ENCODE measurements at regions of chr6 and their contacts with region 1.

Region 1: GRCh38 chr6:98947351-98948292 is at the start of gene FBXL4:
- DNase-seq: peak; percentile 68 to 87 (median 79)
- ATAC-seq: peak; percentile 93
- H3K4me3 ChIP-seq: peak within 1 kb of the TSS; percentile 88
- H3K4me3 Mint-ChIP-seq: peak within 1 kb of the TSS; percentile 85 to 99 (median 96)
- H3K27ac ChIP-seq: peak within 1 kb of the TSS; percentile 70
- H3K27ac Mint-ChIP-seq: peak within 1 kb of the TSS; percentile 90 to 97 (median 94)
- H3K4me1 ChIP-seq: peaks cover 12 to 18% of the 10 kb centered on the region in 2 donors
- H3K4me1 Mint-ChIP-seq: peaks cover 23 to 46% (median 40%) of the 10 kb centered on the region in 7 donors
- H3K27me3 ChIP-seq: no peaks in the 10 kb centered on the region
- H3K27me3 Mint-ChIP-seq: peaks cover 0 to 29% (median 0%) of the 10 kb centered on the region in 5 donors
- total RNA-seq, gene FBXL4: 12.0 to 24.3 (median 13.5) TPM

Region 2: GRCh38 chr6:97282726-97283617 is 1664.7 kb before region 1 on chr6 and contains the start of gene MMS22L:
- CTCF ChIA-PET with region 1: no interaction called
- POLR2A ChIA-PET with region 1: no interaction called
- intact Hi-C with region 1: loop called (anchors 2 kb)
- DNase-seq: peak; percentile 83 to 93 (median 90)
- ATAC-seq: peak; percentile 99
- H3K4me3 ChIP-seq: peak within 1 kb of the TSS; percentile 90
- H3K4me3 Mint-ChIP-seq: peak within 1 kb of the TSS; percentile 90 to 98 (median 96)
- H3K27ac ChIP-seq: peak within 1 kb of the TSS; percentile 70
- H3K27ac Mint-ChIP-seq: peak within 1 kb of the TSS; percentile 83 to 96 (median 89)
- H3K4me1 ChIP-seq: peaks cover 0 to 16% of the 10 kb centered on the region in 2 donors
- H3K4me1 Mint-ChIP-seq: peaks cover 5 to 37% (median 24%) of the 10 kb centered on the region in 7 donors
- H3K27me3 ChIP-seq: no peaks in the 10 kb centered on the region
- H3K27me3 Mint-ChIP-seq: peaks cover 0 to 8% (median 0%) of the 10 kb centered on the region in 5 donors
- total RNA-seq, gene MMS22L: 11.8 to 48.1 (median 12.9) TPM

Region 3: GRCh38 chr6:98808541-98809210 is 138.9 kb before region 1 on chr6:
- CTCF ChIA-PET with region 1: no interaction called
- POLR2A ChIA-PET with region 1: no interaction called
- intact Hi-C with region 1: no loop called
- DNase-seq: no peak
- ATAC-seq: no peak
- H3K4me3 ChIP-seq: no peak overlapping the region
- H3K4me3 Mint-ChIP-seq: no peak overlapping the region
- H3K27ac ChIP-seq: no peak overlapping the region
- H3K27ac Mint-ChIP-seq: no peak overlapping the region
- H3K4me1 ChIP-seq: no peaks in the 10 kb centered on the region
- H3K4me1 Mint-ChIP-seq: no peaks in the 10 kb centered on the region
- H3K27me3 ChIP-seq: no peaks in the 10 kb centered on the region
- H3K27me3 Mint-ChIP-seq: peaks cover 2 to 15% (median 7%) of the 10 kb centered on the region in 5 donors

Region 4: GRCh38 chr6:98845211-98846020 is 102.2 kb before region 1 on chr6:
- CTCF ChIA-PET with region 1: no interaction called
- POLR2A ChIA-PET with region 1: interaction called, 4 read pairs
- intact Hi-C with region 1: loop called in 1 of 2 experiments (anchors 2 kb)
- DNase-seq: peak in 6 of 9 donors; percentile 52 to 68 (median 64)
- ATAC-seq: peak; percentile 80
- H3K4me3 ChIP-seq: no peak overlapping the region
- H3K4me3 Mint-ChIP-seq: peak overlapping the region; percentile 59 to 77 (median 74)
- H3K27ac ChIP-seq: no peak overlapping the region
- H3K27ac Mint-ChIP-seq: peak overlapping the region in 1 of 9 donors; percentile 71
- H3K4me1 ChIP-seq: peaks cover 3 to 28% of the 10 kb centered on the region in 2 donors
- H3K4me1 Mint-ChIP-seq: peaks cover 12 to 43% (median 25%) of the 10 kb centered on the region in 7 donors
- H3K27me3 ChIP-seq: peaks cover 18 to 55% of the 10 kb centered on the region in 2 donors
- H3K27me3 Mint-ChIP-seq: peaks cover 79 to 89% (median 86%) of the 10 kb centered on the region in 5 donors

Region 5: DNA sequence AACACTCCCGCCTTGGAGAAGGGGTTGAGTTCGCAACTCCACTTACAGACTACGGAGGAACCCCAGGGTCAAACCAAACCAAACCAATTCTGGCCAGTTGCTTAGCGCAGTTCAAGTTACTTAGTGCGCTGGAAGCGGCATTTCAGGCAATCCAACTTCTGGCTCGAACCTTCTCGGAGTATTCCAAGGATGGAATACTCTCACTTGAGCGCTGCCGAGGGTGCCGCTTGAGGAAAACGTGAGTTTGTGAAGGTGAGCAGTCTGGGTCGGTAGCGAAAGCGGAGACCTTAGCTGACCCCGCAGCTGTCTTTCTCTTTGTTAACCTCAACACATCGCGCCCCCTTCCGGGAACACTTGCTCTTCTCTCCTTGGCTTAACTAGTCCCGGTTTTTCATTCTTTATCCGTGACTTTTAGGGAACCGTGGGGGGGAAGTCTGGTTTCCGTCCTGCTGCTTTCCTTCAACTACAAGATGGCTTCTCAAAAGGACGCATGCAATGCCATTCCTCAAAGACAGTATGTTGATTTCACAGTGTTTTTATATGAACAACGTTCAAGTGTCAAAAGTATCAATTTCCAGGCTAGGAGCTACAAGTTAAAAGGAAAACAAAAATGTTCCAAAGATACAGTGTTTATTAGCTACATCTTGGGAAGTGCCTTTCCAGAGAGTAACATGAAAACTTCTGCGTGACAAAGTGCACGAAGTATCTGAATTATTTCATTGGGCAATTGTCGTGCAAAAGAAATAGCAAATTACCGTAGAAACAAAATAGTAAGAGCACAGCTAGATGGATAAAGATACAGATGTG is 478.2 kb after region 1 on chr6:
- CTCF ChIA-PET with region 1: no interaction called
- POLR2A ChIA-PET with region 1: no interaction called
- intact Hi-C with region 1: loop called (anchors 1 kb)
- DNase-seq: peak in 4 of 9 donors; percentile 54 to 65 (median 58)
- ATAC-seq: peak; percentile 58
- H3K4me3 ChIP-seq: peak overlapping the region; percentile 95
- H3K4me3 Mint-ChIP-seq: peak overlapping the region; percentile 91 to 100 (median 96)
- H3K27ac ChIP-seq: peak overlapping the region; percentile 93
- H3K27ac Mint-ChIP-seq: peak overlapping the region; percentile 96 to 100 (median 99)
- H3K4me1 ChIP-seq: peaks cover 37 to 50% of the 10 kb centered on the region in 2 donors
- H3K4me1 Mint-ChIP-seq: peaks cover 43 to 74% (median 61%) of the 10 kb centered on the region in 7 donors
- H3K27me3 ChIP-seq: no peaks in the 10 kb centered on the region
- H3K27me3 Mint-ChIP-seq: peaks cover 0 to 2% (median 0%) of the 10 kb centered on the region in 5 donors

Region 6: DNA sequence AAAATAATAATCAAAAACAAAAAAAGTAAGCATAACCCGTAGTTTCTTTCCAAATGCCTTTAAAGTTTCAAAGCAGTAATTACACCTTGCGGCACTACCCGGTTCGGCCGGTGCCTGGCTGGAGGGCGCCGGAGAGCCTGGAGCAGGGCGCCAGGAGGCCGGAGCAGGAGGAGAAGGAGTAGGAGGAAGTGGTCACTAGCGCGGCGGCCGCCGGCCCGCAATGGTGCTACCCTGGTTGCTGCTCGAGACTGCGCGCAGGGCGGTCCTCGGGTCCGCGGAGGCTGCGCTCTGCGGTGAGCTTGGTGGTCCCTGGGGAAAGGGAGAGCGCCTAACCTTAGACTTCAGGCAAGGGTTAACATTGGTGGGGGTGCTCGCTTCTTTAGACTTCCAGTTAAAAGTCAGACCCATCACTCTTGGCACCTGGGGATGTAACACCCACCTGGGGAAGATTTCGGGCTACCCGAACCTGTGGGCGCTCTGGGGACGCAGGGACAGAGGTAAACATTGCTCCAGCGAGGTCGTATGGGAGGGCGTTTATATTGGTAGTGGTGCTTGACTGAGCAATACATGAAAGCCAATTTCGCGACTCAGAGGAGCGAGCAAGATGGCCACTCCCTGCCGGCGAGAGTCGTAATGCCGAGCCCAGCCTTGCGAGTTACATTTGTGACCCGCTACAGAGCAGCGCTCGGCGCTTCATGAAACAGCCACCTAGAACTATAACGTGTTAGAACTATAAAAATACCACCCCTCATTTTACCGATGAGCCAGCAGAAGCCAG is 573.4 kb after region 1 on chr6:
- CTCF ChIA-PET with region 1: no interaction called
- POLR2A ChIA-PET with region 1: no interaction called
- intact Hi-C with region 1: loop called (anchors 5 to 10 kb)
- DNase-seq: peak; percentile 43 to 79 (median 62)
- ATAC-seq: peak; percentile 92
- H3K4me3 ChIP-seq: peak overlapping the region; percentile 73
- H3K4me3 Mint-ChIP-seq: peak overlapping the region; percentile 87 to 99 (median 92)
- H3K27ac ChIP-seq: peak overlapping the region; percentile 60
- H3K27ac Mint-ChIP-seq: peak overlapping the region; percentile 38 to 97 (median 90)
- H3K4me1 ChIP-seq: peaks cover 4 to 11% of the 10 kb centered on the region in 2 donors
- H3K4me1 Mint-ChIP-seq: peaks cover 12 to 26% (median 17%) of the 10 kb centered on the region in 7 donors
- H3K27me3 ChIP-seq: no peaks in the 10 kb centered on the region
- H3K27me3 Mint-ChIP-seq: peaks cover 0 to 15% (median 0%) of the 10 kb centered on the region in 5 donors

Region 7: GRCh38 chr6:100880853-100881706 is 1933.5 kb after region 1 on chr6 and contains the start of gene ASCC3:
- CTCF ChIA-PET with region 1: no interaction called
- POLR2A ChIA-PET with region 1: no interaction called
- intact Hi-C with region 1: loop called in 1 of 2 experiments (anchors 1 kb)
- DNase-seq: peak; percentile 80 to 93 (median 86)
- ATAC-seq: peak; percentile 98
- H3K4me3 ChIP-seq: peak within 1 kb of the TSS; percentile 85
- H3K4me3 Mint-ChIP-seq: peak within 1 kb of the TSS; percentile 97 to 100 (median 100)
- H3K27ac ChIP-seq: peak within 1 kb of the TSS; percentile 90
- H3K27ac Mint-ChIP-seq: peak within 1 kb of the TSS; percentile 95 to 100 (median 98)
- H3K4me1 ChIP-seq: peaks cover 24 to 27% of the 10 kb centered on the region in 2 donors
- H3K4me1 Mint-ChIP-seq: peaks cover 19 to 64% (median 50%) of the 10 kb centered on the region in 7 donors
- H3K27me3 ChIP-seq: no peaks in the 10 kb centered on the region
- H3K27me3 Mint-ChIP-seq: peaks cover 0 to 4% (median 3%) of the 10 kb centered on the region in 5 donors
- total RNA-seq, gene ASCC3: 40.7 to 73.8 (median 42.9) TPM